Heart right ventricle (tissue), 16 donors: ENCODE measurements at regions of chr11 and their contacts with region 1.

Region 1: GRCh38 chr11:119205574-119206510 is at the start of gene CBL:
- DNase-seq: peak; percentile 97
- ATAC-seq: peak; percentile 97 to 98 (median 98)
- H3K4me3 ChIP-seq: peak within 1 kb of the TSS; percentile 85 to 100 (median 94)
- H3K27ac ChIP-seq: peak within 1 kb of the TSS; percentile 85 to 98 (median 97)
- H3K4me1 ChIP-seq: peaks cover 0 to 49% (median 23%) of the 10 kb centered on the region in 9 donors
- H3K27me3 ChIP-seq: no peaks in the 10 kb centered on the region
- CTCF ChIP-seq: peak; percentile 89 to 100 (median 94)
- total RNA-seq, gene CBL: 7.3 to 15.6 (median 8.5) TPM

Region 2: DNA sequence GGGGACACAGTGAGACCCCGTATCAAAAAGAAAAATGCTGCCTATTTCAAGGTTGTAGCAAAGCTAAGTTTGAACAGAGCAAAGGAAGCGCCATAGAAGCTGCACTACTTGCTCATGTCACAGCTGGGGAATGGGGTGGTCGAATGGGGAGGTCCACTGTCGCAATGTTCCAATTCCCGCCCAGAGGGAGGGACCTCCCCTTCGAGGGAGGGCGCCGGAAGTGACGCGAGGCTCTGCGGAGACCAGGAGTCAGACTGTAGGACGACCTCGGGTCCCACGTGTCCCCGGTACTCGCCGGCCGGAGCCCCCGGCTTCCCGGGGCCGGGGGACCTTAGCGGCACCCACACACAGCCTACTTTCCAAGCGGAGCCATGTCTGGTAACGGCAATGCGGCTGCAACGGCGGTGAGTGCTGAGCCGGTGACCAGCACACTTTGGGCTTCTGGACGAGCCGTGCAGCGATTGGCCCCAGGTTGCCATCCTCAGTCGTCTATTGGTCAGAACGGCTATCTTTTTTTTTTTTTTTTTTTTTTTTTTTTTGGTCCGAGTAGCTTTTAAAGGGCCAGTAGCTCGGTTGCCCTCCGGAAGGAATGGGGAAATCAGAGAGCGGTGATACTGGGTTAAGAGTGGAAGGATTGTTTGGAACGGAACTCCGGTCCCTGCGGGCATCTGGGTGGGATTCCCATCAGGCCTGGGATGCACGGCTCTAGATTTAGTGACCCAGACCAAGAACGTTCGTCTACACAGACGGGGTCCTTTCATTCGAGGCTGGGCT is 121.0 kb before region 1 on chr11 and contains the start of gene HMBS:
- intact Hi-C with region 1: no loop called
- DNase-seq: peak; percentile 92 to 94
- ATAC-seq: peak; percentile 95 to 98 (median 98)
- H3K4me3 ChIP-seq: peak within 1 kb of the TSS; percentile 45 to 94 (median 66)
- H3K27ac ChIP-seq: peak within 1 kb of the TSS; percentile 65 to 97 (median 90)
- H3K4me1 ChIP-seq: peaks cover 4 to 43% (median 16%) of the 10 kb centered on the region in 9 donors
- H3K27me3 ChIP-seq: no peaks in the 10 kb centered on the region
- CTCF ChIP-seq: no peak
- total RNA-seq, gene HMBS: 14.3 to 24.9 (median 17.3) TPM

Region 3: DNA sequence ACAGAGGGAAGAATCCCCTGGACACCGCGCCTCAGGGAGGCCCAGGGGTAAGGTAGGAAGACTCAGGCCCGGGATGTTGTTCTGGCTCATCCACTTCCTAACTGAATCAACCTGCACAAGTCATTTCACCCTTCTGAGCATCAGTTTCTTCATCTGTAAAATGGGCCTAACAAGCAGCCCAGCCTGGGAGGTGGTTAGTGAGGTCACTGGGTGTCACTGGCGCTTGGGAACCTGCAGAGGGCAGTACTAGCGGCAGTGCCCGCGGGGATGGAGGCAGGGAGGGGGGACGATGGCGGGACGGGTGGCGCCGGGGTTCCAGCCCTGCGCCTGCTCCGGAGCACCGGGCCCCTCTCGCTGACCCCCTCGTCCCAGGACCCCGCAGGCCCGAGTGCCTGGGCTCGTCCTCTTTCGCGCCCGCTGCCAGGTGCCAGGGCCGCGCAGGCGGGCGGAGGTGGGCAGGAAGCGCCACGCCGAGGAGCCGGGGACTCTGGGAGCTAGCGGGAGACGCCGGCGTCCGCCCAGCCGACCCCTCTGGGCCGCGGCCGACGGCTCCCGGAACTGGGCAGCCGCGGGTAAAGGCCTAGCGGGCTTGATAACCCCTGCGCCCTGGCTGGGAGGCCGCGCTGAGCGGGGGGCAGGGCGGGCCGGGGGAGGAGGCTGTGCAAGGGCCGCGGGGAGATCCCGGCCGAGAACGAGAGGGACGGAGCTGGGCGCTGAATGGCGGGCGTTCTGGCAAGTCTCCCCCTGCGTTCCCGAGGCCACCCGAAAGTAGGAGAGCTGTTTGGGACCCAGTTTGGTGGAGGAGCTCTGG is 37.2 kb before region 1 on chr11 and contains the start of gene NLRX1:
- intact Hi-C with region 1: loop called in 2 of 10 experiments (anchors 5 kb)
- DNase-seq: peak; percentile 83 to 88
- ATAC-seq: peak; percentile 91 to 96 (median 94)
- H3K4me3 ChIP-seq: peak within 1 kb of the TSS; percentile 69 to 100 (median 88)
- H3K27ac ChIP-seq: peak within 1 kb of the TSS; percentile 89 to 99 (median 96)
- H3K4me1 ChIP-seq: peaks cover 0 to 19% (median 8%) of the 10 kb centered on the region in 9 donors
- H3K27me3 ChIP-seq: no peaks in the 10 kb centered on the region
- CTCF ChIP-seq: peak; percentile 77 to 93 (median 91)
- total RNA-seq, gene NLRX1: 24.3 to 39.3 (median 33.6) TPM

Region 4: DNA sequence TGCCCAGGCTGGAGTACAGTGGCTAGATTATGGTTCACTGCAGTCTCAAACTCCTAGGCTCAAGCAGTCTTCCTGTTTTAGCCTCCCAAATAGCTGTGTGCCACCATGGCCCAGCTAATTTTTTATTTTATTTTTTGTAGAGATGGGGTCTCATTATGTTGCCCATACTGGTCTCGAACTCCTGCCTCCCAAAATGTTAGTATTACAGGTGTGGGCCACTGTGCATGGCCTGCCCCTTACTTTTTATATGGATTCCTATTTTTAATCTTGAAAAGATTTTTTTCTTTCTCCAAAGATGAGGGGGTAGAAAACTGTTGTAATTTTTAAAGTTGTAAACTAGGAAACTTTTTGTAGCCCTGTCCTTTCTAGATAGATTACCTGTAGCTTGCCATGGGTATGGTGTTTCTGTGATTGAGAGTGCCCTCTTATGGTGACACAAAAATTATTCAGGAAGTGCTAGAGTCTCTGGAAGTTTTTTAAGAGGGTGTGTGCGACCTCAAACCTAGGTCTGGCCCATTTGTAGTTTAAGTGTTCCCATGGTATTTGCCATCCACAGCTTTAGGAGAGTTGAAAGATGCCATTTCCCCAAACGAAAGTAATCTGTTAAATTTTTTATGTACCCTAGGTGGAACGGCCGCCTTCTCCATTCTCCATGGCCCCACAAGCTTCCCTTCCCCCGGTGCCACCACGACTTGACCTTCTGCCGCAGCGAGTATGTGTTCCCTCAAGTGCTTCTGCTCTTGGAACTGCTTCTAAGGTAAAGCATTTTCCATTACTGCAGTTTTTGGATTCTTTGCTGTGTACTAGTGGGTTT is 78.7 kb after region 1 on chr11:
- intact Hi-C with region 1: loop called in 9 of 10 experiments (anchors 2 to 10 kb)
- DNase-seq: no peak
- ATAC-seq: peak in 7 of 8 donors; percentile 65 to 75 (median 74)
- H3K4me3 ChIP-seq: no peak overlapping the region
- H3K27ac ChIP-seq: no peak overlapping the region
- H3K4me1 ChIP-seq: peaks cover 0 to 9% (median 0%) of the 10 kb centered on the region in 9 donors
- H3K27me3 ChIP-seq: no peaks in the 10 kb centered on the region
- CTCF ChIP-seq: peak; percentile 12 to 73 (median 59)

Region 5: GRCh38 chr11:119315131-119316015 is 109.5 kb after region 1 on chr11:
- intact Hi-C with region 1: loop called in 6 of 10 experiments (anchors 5 to 10 kb)
- DNase-seq: peak; percentile 32 to 53
- ATAC-seq: peak; percentile 9 to 56 (median 30)
- H3K4me3 ChIP-seq: peak overlapping the region; percentile 53 to 94 (median 80)
- H3K27ac ChIP-seq: peak overlapping the region; percentile 82 to 99 (median 92)
- H3K4me1 ChIP-seq: peaks cover 11 to 80% (median 51%) of the 10 kb centered on the region in 9 donors
- H3K27me3 ChIP-seq: peaks cover 0 to 58% (median 0%) of the 10 kb centered on the region in 7 donors
- CTCF ChIP-seq: peak in 2 of 9 donors; percentile 23 to 38

Region 6: GRCh38 chr11:119334174-119334930 is 128.5 kb after region 1 on chr11 and contains the start of gene RNF26:
- intact Hi-C with region 1: loop called in 2 of 10 experiments (anchors 10 kb)
- DNase-seq: peak; percentile 90 to 97
- ATAC-seq: peak; percentile 87 to 96 (median 94)
- H3K4me3 ChIP-seq: peak within 1 kb of the TSS; percentile 82 to 99 (median 90)
- H3K27ac ChIP-seq: peak within 1 kb of the TSS in 9 of 10 donors; percentile 77 to 92 (median 86)
- H3K4me1 ChIP-seq: peaks cover 14 to 46% (median 40%) of the 10 kb centered on the region in 9 donors
- H3K27me3 ChIP-seq: peaks cover 0 to 11% (median 0%) of the 10 kb centered on the region in 7 donors
- CTCF ChIP-seq: no peak
- total RNA-seq, gene RNF26: 11.1 to 17.6 (median 13.4) TPM